Transverse colon (tissue), 4 donors: ENCODE measurements at regions of chr1 and their contacts with region 1.

Region 1: GRCh38 chr1:29688471-29689365 is 452.4 kb downstream of the PTPRU start:
- DNase-seq: no peak
- H3K4me3 ChIP-seq: no peak overlapping the region
- H3K27ac ChIP-seq: no peak overlapping the region
- H3K4me1 ChIP-seq: no peaks in the 10 kb centered on the region
- H3K27me3 ChIP-seq: peaks cover 34% of the 10 kb centered on the region
- CTCF ChIP-seq: no peak
- EP300 ChIP-seq: no peak
- POLR2A ChIP-seq: no peak

Region 2: GRCh38 chr1:29633771-29634170 is 54.9 kb before region 1 on chr1:
- in situ Hi-C with region 1: no loop called
- intact Hi-C with region 1: no loop called
- DNase-seq: no peak
- H3K4me3 ChIP-seq: no peak overlapping the region
- H3K27ac ChIP-seq: no peak overlapping the region
- H3K4me1 ChIP-seq: no peaks in the 10 kb centered on the region
- H3K27me3 ChIP-seq: peaks cover 6% of the 10 kb centered on the region
- CTCF ChIP-seq: no peak
- EP300 ChIP-seq: no peak
- POLR2A ChIP-seq: no peak

Region 3: GRCh38 chr1:29644812-29645211 is 43.9 kb before region 1 on chr1:
- in situ Hi-C with region 1: no loop called
- intact Hi-C with region 1: loop called (anchors 1 kb)
- DNase-seq: no peak
- H3K4me3 ChIP-seq: no peak overlapping the region
- H3K27ac ChIP-seq: no peak overlapping the region
- H3K4me1 ChIP-seq: no peaks in the 10 kb centered on the region
- H3K27me3 ChIP-seq: no peaks in the 10 kb centered on the region
- CTCF ChIP-seq: no peak
- EP300 ChIP-seq: no peak
- POLR2A ChIP-seq: no peak

Region 4: DNA sequence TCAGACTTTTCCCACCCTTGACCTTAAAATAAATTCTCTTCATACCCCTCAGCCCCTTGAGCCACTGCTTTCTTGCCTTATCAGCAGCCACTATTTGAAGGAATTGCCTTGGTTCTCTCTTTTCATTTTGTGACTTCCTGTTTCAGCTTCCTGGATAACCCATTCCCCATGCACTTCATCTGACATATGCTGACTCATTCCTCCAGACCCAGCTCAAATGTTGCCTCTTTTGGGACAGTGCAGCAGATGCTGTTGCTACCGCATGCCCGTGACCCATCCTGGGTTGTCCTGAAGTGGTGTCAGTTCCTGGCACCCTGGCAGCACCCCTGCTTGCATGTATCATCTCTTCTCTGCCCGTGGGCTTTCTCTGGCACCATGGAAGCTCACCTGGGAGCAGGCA is 43.7 kb after region 1 on chr1:
- in situ Hi-C with region 1: no loop called
- intact Hi-C with region 1: no loop called
- DNase-seq: no peak
- H3K4me3 ChIP-seq: no peak overlapping the region
- H3K27ac ChIP-seq: no peak overlapping the region
- H3K4me1 ChIP-seq: no peaks in the 10 kb centered on the region
- H3K27me3 ChIP-seq: no peaks in the 10 kb centered on the region
- CTCF ChIP-seq: no peak
- EP300 ChIP-seq: no peak
- POLR2A ChIP-seq: no peak

Region 5: DNA sequence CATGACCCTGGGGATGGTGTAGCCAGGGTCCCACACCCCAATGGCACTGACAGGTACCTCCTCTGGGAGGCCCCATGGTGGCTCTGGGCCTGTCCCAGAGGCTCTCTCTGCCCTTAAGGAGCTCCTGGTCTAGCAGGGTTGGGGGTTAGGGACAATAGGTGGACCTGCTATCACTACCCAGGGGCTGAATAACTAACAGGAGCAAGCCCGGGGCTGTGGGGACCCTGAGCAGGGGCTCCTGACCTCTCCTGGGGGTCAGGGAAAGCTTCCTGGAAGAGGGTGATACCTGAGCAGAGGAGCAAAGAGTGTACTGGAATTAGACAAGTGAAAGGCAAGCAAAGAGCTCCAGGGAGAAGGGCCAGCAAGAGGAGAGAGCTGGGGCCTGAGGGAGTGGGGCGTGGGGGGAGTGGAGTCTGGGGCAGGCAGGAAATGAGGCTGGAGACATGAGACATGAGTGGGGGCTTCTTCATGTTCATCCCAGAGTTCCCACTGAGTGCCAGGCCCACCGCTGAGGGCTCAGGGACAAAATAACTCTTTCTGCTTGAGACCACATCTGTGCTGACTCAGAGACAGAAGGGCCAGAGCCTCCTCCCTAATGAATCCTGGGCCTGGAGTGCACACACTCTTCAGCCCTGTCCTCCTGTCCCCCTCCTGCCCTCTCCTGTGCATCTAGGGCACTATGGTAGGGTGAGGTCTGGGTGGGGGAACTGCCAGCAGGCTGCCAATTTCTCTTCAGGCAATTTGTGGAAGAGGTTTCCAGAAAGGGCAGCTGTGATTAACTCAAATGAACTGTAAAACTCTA is 65.3 kb after region 1 on chr1:
- in situ Hi-C with region 1: no loop called
- intact Hi-C with region 1: no loop called
- DNase-seq: no peak
- H3K4me3 ChIP-seq: no peak overlapping the region
- H3K27ac ChIP-seq: no peak overlapping the region
- H3K4me1 ChIP-seq: peaks cover 0 to 5% (median 0%) of the 10 kb centered on the region in 4 donors
- H3K27me3 ChIP-seq: peaks cover 4% of the 10 kb centered on the region
- CTCF ChIP-seq: no peak
- EP300 ChIP-seq: no peak
- POLR2A ChIP-seq: no peak

Region 6: DNA sequence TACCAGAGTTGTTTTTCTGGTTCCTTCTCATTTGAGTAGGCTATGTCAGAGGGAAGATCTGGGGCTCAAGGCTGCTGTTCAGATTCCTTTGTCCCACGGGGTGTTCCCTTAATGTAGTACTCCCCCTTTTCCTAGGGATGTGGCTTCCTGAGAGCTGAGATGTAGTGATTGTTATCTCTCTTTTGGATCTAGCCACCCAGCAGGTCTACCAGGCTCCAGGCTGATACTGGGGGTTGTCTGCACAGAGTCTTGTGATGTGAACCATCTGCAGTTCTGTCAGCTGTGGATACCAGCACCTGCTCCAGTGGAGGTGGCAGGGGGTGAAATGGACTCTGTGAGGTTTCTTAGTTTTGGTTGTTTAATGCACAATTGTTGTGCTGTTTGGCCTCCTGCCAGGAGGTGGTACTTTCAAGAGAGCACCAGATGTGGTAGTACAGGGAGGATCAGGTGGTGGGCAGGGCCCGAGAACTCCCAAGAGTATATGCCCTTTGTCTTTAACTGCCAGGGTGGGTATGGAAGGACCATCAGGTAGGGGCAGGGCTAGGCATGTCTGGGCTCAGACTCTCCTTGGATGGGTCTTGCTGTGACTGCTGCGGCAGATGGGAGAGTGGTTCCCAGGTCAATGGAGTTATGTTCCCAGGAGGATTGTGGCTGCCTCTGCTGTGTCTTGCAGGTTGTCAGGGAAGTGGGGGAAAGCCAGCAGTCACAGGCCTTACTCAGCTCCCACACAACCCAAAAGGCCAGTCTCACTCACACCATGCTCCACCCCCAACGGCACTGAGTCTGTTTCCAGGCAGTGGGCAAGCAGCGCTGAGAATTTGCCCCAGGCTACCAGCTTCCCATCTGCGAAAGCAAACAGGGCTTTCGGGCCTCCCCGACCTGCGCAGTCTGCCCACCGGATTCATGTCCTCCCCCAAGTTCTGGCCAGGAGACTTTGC is 1788.4 kb after region 1 on chr1:
- in situ Hi-C with region 1: no loop called
- intact Hi-C with region 1: loop called (anchors 5 kb)
- DNase-seq: no peak
- H3K4me3 ChIP-seq: no peak overlapping the region
- H3K27ac ChIP-seq: no peak overlapping the region
- H3K4me1 ChIP-seq: peaks cover 0 to 23% (median 10%) of the 10 kb centered on the region in 4 donors
- H3K27me3 ChIP-seq: no peaks in the 10 kb centered on the region
- CTCF ChIP-seq: no peak
- EP300 ChIP-seq: no peak
- POLR2A ChIP-seq: no peak